Activated naive CD8-positive, alpha-beta T cell treated with anti-CD3 and anti-CD28 coated beads, Interleukin-2, amount 10 ng/mL, durations not matched to agents 7 days and 5 days (primary cell): ENCODE measurements at regions of chr15 and their contacts with region 1.

Region 1: GRCh38 chr15:74460871-74461846 is at the start of gene UBL7:
- DNase-seq: peak; percentile 94
- ATAC-seq: peak; percentile 97
- H3K4me3 Mint-ChIP-seq: peak within 1 kb of the TSS; percentile 92
- H3K27ac Mint-ChIP-seq: peak within 1 kb of the TSS; percentile 78
- H3K4me1 Mint-ChIP-seq: peaks cover 40% of the 10 kb centered on the region
- H3K27me3 Mint-ChIP-seq: no peaks in the 10 kb centered on the region
- total RNA-seq, gene UBL7: 55.3 to 63.2 TPM

Region 2: GRCh38 chr15:74433592-74434262 is 27.4 kb before region 1 on chr15 and contains the start of gene SEMA7A:
- POLR2A ChIA-PET with region 1: interaction called, 15 read pairs
- DNase-seq: peak; percentile 89
- ATAC-seq: peak; percentile 88
- H3K4me3 Mint-ChIP-seq: peak within 1 kb of the TSS; percentile 87
- H3K27ac Mint-ChIP-seq: peak within 1 kb of the TSS; percentile 89
- H3K4me1 Mint-ChIP-seq: peaks cover 60% of the 10 kb centered on the region
- H3K27me3 Mint-ChIP-seq: no peaks in the 10 kb centered on the region
- total RNA-seq, gene SEMA7A: 15.2 to 15.8 TPM

Region 3: GRCh38 chr15:74438721-74439316 is 22.3 kb before region 1 on chr15:
- POLR2A ChIA-PET with region 1: interaction called, 15 read pairs
- DNase-seq: peak; percentile 84
- ATAC-seq: peak; percentile 73
- H3K4me3 Mint-ChIP-seq: no peak overlapping the region
- H3K27ac Mint-ChIP-seq: peak overlapping the region; percentile 1
- H3K4me1 Mint-ChIP-seq: peaks cover 49% of the 10 kb centered on the region
- H3K27me3 Mint-ChIP-seq: no peaks in the 10 kb centered on the region

Region 4: GRCh38 chr15:74545880-74546656 is 84.9 kb after region 1 on chr15:
- POLR2A ChIA-PET with region 1: interaction called, 11 read pairs
- DNase-seq: peak; percentile 89
- ATAC-seq: peak; percentile 80
- H3K4me3 Mint-ChIP-seq: peak overlapping the region; percentile 75
- H3K27ac Mint-ChIP-seq: peak overlapping the region; percentile 44
- H3K4me1 Mint-ChIP-seq: peaks cover 64% of the 10 kb centered on the region
- H3K27me3 Mint-ChIP-seq: no peaks in the 10 kb centered on the region